Endothelial cell of umbilical vein (primary cell): ENCODE measurements at regions of chr2 and their contacts with region 1.

Region 1: DNA sequence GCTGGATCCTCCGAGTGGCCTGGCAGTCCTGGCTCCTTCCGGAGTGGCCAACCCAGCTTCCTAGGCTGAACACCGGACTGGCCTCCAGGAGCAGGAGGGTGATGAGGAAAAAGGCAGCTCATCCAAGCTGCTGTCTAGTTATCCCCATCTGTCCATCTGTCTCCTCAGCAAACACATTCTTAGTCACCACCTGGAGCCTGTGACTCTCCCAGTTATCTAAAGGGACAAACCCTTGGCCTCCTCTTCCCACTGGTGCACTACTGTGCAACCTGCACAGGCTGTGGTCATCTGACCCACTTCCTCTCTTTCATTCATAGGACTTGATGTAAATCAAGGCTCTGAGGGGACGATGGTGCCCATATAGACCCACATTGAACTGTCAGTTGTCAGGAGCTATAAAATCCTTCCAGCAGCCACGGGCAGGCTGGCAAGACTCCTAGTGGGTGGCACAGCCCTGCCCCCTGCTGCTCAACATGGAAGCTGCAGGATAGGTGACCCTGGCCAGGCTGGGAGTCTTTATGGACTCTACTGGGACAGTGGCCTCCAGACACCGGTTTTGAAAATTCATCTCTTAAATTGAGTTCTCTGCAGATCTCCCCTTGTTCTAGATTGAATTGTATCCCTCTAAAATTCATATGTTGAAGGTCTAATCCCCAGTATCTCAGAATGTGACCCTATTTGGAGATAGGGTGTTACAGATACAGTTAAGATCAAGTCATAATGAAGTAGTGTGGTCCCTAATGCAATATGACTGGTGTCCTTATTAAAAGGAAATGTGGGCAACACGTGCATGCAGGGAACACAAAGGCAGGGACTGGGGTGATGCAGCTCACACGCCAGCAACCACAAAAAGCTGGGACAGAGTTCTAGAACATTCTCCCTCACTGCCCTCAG is 29.3 kb upstream of the DUSP2 start:
- DNase-seq: peak; percentile 65
- H3K4me3 ChIP-seq: no peak overlapping the region
- H3K27ac ChIP-seq: no peak overlapping the region
- H3K4me1 ChIP-seq: no peaks in the 10 kb centered on the region
- H3K27me3 ChIP-seq: no peaks in the 10 kb centered on the region
- CTCF ChIP-seq: peak; percentile 78 to 90
- POLR2A ChIP-seq: no peak

Region 2: GRCh38 chr2:96024336-96025193 is 149.9 kb before region 1 on chr2:
- CTCF ChIA-PET with region 1: interaction called, 87 read pairs
- POLR2A ChIA-PET with region 1: no interaction called
- dilution Hi-C with region 1: no loop called
- intact Hi-C with region 1: no loop called
- DNase-seq: no peak
- H3K4me3 ChIP-seq: no peak overlapping the region
- H3K27ac ChIP-seq: no peak overlapping the region
- H3K4me1 ChIP-seq: no peaks in the 10 kb centered on the region
- H3K27me3 ChIP-seq: no peaks in the 10 kb centered on the region
- CTCF ChIP-seq: no peak
- POLR2A ChIP-seq: no peak

Region 3: DNA sequence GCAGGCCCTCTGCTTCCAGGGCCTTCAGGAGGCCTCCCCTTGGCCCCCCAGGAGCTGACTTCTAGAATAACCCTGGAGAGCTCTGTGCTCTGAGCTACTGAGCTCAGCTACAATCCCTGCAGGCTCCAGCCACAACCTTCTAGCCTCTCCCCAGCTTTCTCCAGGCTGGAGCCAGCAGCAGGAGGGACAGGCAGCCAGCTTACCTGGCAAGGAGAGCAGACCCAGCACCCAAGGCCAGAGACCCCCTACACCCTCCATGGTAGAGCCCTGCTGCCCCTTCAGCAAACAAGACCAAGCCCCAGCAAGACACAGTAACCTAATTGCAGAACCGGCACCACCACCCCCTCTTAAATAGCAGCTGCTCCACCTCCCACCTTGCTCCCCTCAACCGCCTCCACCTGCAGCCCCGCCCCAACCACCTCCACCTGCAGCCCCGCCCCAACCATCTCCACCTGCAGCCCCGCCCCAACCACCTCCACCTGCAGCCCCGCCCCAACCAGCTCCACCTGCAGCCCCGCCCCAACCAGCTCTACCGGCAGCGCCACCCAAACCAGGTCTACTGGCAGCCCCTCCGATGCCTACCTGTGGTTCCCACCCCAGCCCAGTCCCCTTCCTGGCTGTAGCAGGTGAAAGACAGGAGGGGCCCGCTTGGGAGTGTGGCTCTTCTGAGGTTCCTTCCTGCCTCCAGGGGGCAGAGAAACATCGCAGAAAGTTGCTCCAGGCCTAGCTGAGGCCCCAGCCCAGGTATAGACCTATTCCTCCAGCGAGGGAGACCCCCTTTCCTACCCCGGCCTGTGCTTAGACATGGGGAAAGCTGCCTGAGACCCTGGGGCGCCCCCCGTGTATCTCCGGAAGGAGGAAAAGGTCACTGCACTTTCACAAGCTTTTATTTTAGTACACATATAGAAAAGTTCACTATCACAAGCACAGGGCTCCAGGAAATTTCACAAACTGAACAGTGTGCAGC is 36.0 kb before region 1 on chr2 and contains the start of gene ASTL:
- CTCF ChIA-PET with region 1: interaction called, 208 read pairs
- POLR2A ChIA-PET with region 1: no interaction called
- dilution Hi-C with region 1: no loop called
- intact Hi-C with region 1: loop called (anchors 1 kb)
- DNase-seq: peak; percentile 19
- H3K4me3 ChIP-seq: no peak within 1 kb of the TSS
- H3K27ac ChIP-seq: no peak within 1 kb of the TSS
- H3K4me1 ChIP-seq: no peaks in the 10 kb centered on the region
- H3K27me3 ChIP-seq: peaks cover 0 to 3% of the 10 kb centered on the region in 2 experiments
- CTCF ChIP-seq: peak; percentile 26 to 68
- POLR2A ChIP-seq: no peak
- total RNA-seq, gene ASTL: not detected in 2 replicates

Region 4: GRCh38 chr2:96157651-96158553 is 16.6 kb before region 1 on chr2:
- CTCF ChIA-PET with region 1: interaction called, 26 read pairs
- POLR2A ChIA-PET with region 1: no interaction called
- dilution Hi-C with region 1: no loop called
- intact Hi-C with region 1: no loop called
- DNase-seq: no peak
- H3K4me3 ChIP-seq: no peak overlapping the region
- H3K27ac ChIP-seq: no peak overlapping the region
- H3K4me1 ChIP-seq: no peaks in the 10 kb centered on the region
- H3K27me3 ChIP-seq: peaks cover 0 to 6% of the 10 kb centered on the region in 2 experiments
- CTCF ChIP-seq: no peak
- POLR2A ChIP-seq: no peak

Region 5: GRCh38 chr2:96202152-96202854 is 27.8 kb after region 1 on chr2:
- CTCF ChIA-PET with region 1: interaction called, 17 read pairs
- POLR2A ChIA-PET with region 1: no interaction called
- dilution Hi-C with region 1: no loop called
- intact Hi-C with region 1: no loop called
- DNase-seq: no peak
- H3K4me3 ChIP-seq: no peak overlapping the region
- H3K27ac ChIP-seq: no peak overlapping the region
- H3K4me1 ChIP-seq: peaks cover 27% of the 10 kb centered on the region
- H3K27me3 ChIP-seq: no peaks in the 10 kb centered on the region
- CTCF ChIP-seq: no peak
- POLR2A ChIP-seq: no peak

Region 6: GRCh38 chr2:96218508-96219131 is 44.1 kb after region 1 on chr2:
- CTCF ChIA-PET with region 1: no interaction called
- POLR2A ChIA-PET with region 1: no interaction called
- dilution Hi-C with region 1: no loop called
- intact Hi-C with region 1: no loop called
- DNase-seq: no peak
- H3K4me3 ChIP-seq: no peak overlapping the region
- H3K27ac ChIP-seq: no peak overlapping the region
- H3K4me1 ChIP-seq: no peaks in the 10 kb centered on the region
- H3K27me3 ChIP-seq: no peaks in the 10 kb centered on the region
- CTCF ChIP-seq: no peak
- POLR2A ChIP-seq: no peak

Region 7: GRCh38 chr2:96265840-96266679 is 91.6 kb after region 1 on chr2 and contains the starts of genes CIAO1 and TMEM127:
- CTCF ChIA-PET with region 1: interaction called, 14 read pairs
- POLR2A ChIA-PET with region 1: no interaction called
- dilution Hi-C with region 1: no loop called
- intact Hi-C with region 1: no loop called
- DNase-seq: peak; percentile 99
- H3K4me3 ChIP-seq: peak within 1 kb of the TSS; percentile 73 to 92 (median 91)
- H3K27ac ChIP-seq: peak within 1 kb of the TSS; percentile 63
- H3K4me1 ChIP-seq: peaks cover 20% of the 10 kb centered on the region
- H3K27me3 ChIP-seq: no peaks in the 10 kb centered on the region
- CTCF ChIP-seq: peak; percentile 26 to 62
- POLR2A ChIP-seq: peak; percentile 71
- total RNA-seq, gene CIAO1: 64.3 and 70.7 TPM in 2 replicates
- total RNA-seq, gene TMEM127: 41.5 and 48.4 TPM in 2 replicates